GM13976 (cell line): ENCODE measurements at regions of chr15 and their contacts with region 1.

Region 1: GRCh38 chr15:57306161-57306943 is 70.0 kb upstream of the CGNL1 start:
- DNase-seq: peak; percentile 92
- CTCF ChIP-seq: peak; percentile 96

Region 2: GRCh38 chr15:56491110-56491722 is 815.1 kb before region 1 on chr15:
- in situ Hi-C with region 1: loop called (anchors 10 kb)
- DNase-seq: peak; percentile 71
- CTCF ChIP-seq: peak; percentile 85

Region 3: DNA sequence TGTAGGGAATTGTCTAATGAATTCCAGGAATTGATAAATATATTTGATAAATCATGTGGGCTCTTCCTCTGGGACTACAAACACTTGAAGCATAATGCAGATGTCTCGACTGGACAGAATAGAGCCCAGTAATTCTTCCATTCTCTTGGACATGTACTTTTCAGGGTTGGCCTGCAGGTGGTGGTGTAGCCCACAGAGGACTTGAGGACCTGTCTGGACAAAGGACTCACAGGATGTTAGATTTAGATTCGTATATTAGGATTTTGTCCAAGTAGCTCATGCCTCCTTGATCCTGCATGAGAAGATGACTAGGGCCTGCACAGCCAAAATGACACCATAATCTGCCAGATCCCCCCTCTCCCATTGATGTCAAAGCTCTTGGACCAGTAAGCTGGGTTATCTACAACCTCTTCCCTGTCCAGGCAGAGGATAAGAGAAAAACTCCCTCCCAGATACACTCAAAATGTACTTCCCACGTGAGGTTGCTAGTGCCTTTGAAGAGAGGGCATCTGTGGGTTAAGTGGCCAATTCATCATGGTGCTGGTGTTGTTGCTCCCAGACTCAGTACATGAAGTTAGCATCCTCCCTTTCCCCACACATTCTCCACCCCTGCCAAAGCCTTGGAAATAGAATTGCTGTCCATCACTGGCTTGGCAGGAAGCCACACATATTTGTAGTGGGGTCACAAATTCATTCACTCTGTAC is 484.5 kb before region 1 on chr15:
- in situ Hi-C with region 1: loop called (anchors 25 kb)
- DNase-seq: peak; percentile 41
- CTCF ChIP-seq: peak; percentile 40

Region 4: GRCh38 chr15:56918046-56918938 is 388.1 kb before region 1 on chr15 and contains the start of gene TCF12:
- in situ Hi-C with region 1: loop called (anchors 25 kb)
- DNase-seq: peak; percentile 94
- CTCF ChIP-seq: peak; percentile 50

Region 5: DNA sequence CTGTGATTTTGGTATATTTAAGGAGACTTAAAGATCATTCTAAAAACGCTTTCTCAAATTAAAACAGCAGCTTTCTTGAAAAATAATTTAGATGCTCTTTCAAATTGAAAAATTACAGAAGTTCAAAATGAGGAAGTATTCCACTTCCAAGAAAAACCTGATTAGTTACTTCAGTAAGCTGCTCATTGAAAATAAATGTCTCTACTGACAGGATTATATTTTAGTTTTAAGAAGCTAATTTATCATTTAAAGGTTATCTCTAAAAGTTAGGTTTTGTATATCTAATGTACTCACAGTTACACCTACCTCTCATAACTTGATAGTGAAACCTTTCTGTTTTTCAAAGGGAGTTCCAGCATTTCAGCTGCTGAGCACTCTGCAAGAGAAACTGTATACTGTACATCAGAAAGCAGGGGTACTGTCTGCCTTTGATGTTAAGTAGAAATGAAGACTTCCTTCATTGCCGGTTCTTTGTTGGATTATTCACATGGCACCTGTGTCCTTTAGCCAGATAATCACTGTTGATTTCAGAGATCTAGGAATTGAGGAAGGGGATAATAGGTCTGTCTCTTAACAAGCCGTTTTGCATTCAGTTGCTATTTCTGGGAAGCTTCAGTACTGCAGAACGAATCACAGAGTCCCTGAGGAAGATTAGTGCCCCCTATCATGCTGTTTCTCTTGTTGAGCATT is 226.3 kb before region 1 on chr15:
- in situ Hi-C with region 1: no loop called
- DNase-seq: no peak
- CTCF ChIP-seq: no peak

Region 6: GRCh38 chr15:57146506-57147201 is 159.7 kb before region 1 on chr15:
- in situ Hi-C with region 1: loop called (anchors 5 kb)
- DNase-seq: peak; percentile 28
- CTCF ChIP-seq: peak; percentile 44